OCI-LY7 (cell line): ENCODE measurements at regions of chr20 and their contacts with region 1.

Region 1: DNA sequence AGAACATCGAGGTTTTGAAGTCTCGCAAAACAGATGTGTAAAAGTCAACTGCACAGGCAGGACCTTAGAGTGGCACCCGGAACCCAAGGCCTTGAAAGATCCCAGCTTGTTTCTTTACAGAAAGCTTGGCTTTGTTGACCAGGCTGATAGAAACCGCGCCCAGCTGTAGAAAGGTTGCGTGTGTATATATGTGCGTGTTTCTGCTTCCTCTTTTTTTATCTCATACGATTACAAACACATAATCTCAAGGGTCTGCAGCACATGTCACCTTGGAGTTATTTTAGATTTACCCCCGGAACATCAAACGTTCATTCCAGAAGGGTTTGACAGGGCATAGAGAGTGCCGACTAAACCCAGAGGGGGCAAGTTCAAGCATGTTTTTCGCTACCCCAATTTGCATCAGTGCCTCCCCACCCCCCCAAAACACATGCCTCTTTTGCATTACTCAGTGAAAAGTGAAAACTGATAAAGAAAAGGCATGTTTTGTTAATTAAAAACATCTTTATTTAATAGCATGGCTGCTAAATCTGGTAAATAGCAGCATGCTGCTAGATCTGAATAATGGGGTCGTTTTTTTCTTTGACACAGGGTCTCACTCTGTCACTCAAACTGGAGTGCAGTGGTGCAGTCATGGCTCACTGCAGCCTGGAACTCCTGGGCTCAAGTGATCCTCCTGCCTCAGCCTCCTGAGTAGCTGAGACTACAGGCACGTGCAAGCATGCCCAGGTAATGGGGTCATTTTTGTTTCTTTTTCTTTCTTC is 33.2 kb upstream of the NCOA3 start:
- DNase-seq: peak; percentile 94
- H3K4me3 ChIP-seq: peak overlapping the region; percentile 37
- H3K27ac ChIP-seq: peak overlapping the region; percentile 95
- H3K4me1 ChIP-seq: peaks cover 90% of the 10 kb centered on the region
- CTCF ChIP-seq: no peak

Region 2: GRCh38 chr20:47370850-47371676 is 97.4 kb before region 1 on chr20:
- CTCF ChIA-PET with region 1: no interaction called
- POLR2A ChIA-PET with region 1: no interaction called
- intact Hi-C with region 1: no loop called
- DNase-seq: no peak
- H3K4me3 ChIP-seq: no peak overlapping the region
- H3K27ac ChIP-seq: no peak overlapping the region
- H3K4me1 ChIP-seq: no peaks in the 10 kb centered on the region
- CTCF ChIP-seq: no peak

Region 3: GRCh38 chr20:47438577-47439381 is 29.7 kb before region 1 on chr20:
- CTCF ChIA-PET with region 1: no interaction called
- POLR2A ChIA-PET with region 1: interaction called, 10 read pairs
- intact Hi-C with region 1: loop called (anchors 1 kb)
- DNase-seq: peak; percentile 85
- H3K4me3 ChIP-seq: peak overlapping the region; percentile 60
- H3K27ac ChIP-seq: peak overlapping the region; percentile 84
- H3K4me1 ChIP-seq: peaks cover 69% of the 10 kb centered on the region
- CTCF ChIP-seq: no peak

Region 4: DNA sequence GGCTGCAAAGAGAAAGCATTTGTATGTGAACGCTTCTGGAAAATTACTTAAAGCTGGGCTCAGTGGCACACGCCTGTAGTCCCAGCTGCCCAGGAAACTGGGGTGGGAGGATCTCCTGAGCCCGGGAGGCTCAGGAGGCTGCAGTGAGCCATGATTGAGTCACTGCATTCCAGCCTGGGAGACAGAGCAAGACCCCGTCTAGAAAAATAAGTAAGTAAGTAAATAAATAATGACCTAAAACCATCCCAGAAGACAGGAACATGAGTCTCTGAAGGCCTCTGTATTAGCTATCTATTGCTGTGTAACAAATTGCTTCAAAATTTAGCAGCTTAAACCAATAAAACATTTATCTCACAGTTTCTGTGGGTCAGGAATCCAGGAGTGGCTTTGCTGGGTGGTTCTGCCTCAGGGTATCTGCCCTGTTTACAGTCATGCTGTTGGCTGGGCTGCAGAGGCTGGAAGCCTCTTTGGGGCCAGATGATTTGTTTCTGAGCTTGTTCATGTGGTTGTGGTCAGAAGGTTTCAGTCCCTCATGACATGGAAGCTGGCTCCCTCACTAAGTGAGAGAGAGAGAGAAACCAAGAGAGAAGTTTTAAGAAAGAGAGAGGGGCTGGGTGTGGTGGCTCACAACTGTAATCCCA is 15.2 kb before region 1 on chr20:
- CTCF ChIA-PET with region 1: no interaction called
- POLR2A ChIA-PET with region 1: interaction called, 14 read pairs
- intact Hi-C with region 1: no loop called
- DNase-seq: peak; percentile 70
- H3K4me3 ChIP-seq: no peak overlapping the region
- H3K27ac ChIP-seq: peak overlapping the region; percentile 46
- H3K4me1 ChIP-seq: peaks cover 66% of the 10 kb centered on the region
- CTCF ChIP-seq: no peak

Region 5: DNA sequence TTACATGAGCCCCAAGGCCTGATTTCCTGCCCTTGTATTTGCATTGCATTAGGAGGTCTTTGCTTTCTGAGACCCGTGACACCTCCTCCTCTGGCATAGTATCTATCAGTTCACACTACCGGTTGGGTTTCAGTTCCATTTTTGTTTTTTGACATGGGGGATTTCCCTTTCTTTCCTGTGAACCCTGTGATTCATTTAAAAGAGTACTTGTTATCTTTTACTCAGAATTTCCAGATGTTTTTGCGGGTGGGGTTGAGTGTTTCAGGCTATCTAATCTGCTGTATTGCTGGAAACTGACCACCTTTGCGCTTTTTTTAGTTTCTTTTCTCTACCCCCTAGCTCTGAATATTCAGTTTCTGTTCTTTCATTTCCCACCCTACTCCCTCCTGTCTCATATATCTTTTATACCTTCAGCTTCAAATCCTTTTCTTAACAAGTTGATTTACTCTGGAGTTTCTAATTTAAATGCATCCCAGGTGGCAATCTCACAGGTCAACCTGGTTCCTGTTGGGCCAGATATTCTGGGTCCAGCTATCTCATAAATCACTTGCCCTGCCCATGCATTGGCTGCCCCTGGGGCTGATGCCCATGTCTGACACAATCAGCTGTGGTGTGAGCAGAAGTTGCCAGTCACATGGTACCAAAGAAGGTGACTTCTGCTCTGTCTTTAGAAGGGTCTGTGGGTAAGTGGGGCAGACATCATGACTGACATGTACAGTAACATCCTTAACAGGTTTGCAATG is 18.9 kb after region 1 on chr20:
- CTCF ChIA-PET with region 1: interaction called, 4 read pairs
- POLR2A ChIA-PET with region 1: interaction called, 15 read pairs
- intact Hi-C with region 1: loop called (anchors 1 kb)
- DNase-seq: peak; percentile 96
- H3K4me3 ChIP-seq: peak overlapping the region; percentile 55
- H3K27ac ChIP-seq: peak overlapping the region; percentile 98
- H3K4me1 ChIP-seq: peaks cover 97% of the 10 kb centered on the region
- CTCF ChIP-seq: no peak